Mammary epithelial cell (primary cell): ENCODE measurements at regions of chr6 and their contacts with region 1.

Region 1: DNA sequence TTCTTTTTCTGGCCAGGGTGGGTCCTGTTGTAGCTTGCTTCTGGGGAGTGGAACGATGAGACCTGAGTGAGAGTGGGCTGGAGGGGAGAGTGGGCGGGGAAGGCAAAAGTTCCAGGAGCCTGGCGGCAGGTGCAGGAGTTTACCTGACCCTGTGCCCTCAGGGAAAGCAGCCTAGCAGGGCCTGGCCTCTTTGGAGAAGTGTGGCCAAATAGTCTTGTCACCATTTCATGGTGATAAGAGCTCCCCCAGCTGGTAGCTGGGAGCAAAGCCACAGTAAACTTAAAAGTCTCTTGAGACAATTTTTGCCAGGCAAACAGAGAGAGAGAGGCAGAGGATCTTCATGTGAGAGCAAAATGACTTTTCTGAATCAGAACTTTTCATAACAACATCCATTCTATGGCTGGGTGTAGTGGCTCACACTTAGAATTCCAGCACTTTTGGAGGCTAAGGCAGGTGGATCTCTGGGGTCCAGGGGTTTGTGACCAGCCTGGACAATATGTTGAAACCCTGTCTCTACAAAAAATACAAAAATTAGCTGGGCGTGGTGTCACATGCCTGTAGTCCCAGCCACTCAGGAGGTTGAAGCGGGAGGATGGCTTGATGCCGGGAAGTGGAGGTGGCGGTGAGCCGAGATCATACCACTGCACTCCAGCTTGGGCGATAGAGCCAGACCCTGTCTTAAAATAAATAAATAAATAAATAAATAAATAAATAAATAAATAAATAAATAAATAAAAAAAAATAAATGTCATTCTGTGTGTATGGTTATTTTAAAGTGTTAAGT is 161.8 kb upstream of the SCGN start:
- DNase-seq: peak; percentile 66
- H3K4me3 ChIP-seq: no peak overlapping the region
- H3K27ac ChIP-seq: no peak overlapping the region
- H3K4me1 ChIP-seq: no peaks in the 10 kb centered on the region
- H3K27me3 ChIP-seq: no peaks in the 10 kb centered on the region
- CTCF ChIP-seq: peak; percentile 87 to 91

Region 2: DNA sequence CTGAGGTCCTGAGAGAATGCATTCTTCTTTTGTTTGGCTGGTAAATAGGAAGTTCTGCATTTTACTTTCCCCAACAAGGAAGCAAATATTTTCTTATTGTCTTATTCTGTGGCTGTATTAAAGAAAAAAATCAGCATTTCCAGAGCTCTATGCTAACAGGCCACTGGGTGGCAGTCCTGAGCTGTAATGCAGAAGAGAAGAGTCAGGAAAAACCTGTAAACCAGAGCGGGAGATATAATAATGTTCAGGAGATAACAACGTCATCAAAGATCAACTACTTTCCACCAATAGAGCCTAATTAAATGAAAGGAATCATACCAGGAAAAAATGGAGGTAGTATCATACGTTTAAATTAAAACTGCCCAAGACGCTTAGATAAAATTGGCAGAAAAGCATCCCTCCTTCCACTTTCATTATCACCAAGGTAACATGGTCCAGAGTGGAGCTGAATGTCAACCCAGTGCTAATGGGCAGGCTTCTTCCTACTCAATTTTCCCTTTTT is 266.7 kb before region 1 on chr6:
- CTCF ChIA-PET with region 1: interaction called, 5 read pairs
- dilution Hi-C with region 1: no loop called
- in situ Hi-C with region 1: no loop called
- intact Hi-C with region 1: loop called (anchors 1 kb)
- DNase-seq: peak; percentile 52
- H3K4me3 ChIP-seq: peak overlapping the region in 2 of 3 experiments; percentile 3
- H3K27ac ChIP-seq: no peak overlapping the region
- H3K4me1 ChIP-seq: peaks cover 20% of the 10 kb centered on the region
- H3K27me3 ChIP-seq: no peaks in the 10 kb centered on the region
- CTCF ChIP-seq: peak; percentile 84 to 92

Region 3: DNA sequence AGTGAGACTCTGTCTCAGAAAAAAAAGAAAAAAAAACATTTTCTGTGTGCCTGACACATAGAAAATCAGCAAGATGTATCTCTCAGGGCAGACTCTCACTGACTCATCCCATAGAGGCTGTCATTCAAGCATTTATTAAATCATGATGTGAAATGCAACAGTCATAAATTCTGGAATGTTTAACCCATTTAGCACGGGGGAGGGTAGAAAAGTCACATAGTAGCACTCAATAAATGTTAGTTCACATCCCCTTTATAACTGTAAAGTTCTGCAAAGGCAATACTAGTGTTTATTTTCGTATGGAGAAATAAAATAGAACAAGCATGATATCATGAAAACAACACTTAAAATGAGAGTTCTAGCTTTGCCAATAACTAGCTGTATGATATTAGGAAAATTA is 226.6 kb before region 1 on chr6:
- CTCF ChIA-PET with region 1: interaction called, 21 read pairs
- dilution Hi-C with region 1: no loop called
- in situ Hi-C with region 1: no loop called
- intact Hi-C with region 1: loop called (anchors 1 kb)
- DNase-seq: peak; percentile 68
- H3K4me3 ChIP-seq: no peak overlapping the region
- H3K27ac ChIP-seq: no peak overlapping the region
- H3K4me1 ChIP-seq: no peaks in the 10 kb centered on the region
- H3K27me3 ChIP-seq: no peaks in the 10 kb centered on the region
- CTCF ChIP-seq: no peak

Region 4: DNA sequence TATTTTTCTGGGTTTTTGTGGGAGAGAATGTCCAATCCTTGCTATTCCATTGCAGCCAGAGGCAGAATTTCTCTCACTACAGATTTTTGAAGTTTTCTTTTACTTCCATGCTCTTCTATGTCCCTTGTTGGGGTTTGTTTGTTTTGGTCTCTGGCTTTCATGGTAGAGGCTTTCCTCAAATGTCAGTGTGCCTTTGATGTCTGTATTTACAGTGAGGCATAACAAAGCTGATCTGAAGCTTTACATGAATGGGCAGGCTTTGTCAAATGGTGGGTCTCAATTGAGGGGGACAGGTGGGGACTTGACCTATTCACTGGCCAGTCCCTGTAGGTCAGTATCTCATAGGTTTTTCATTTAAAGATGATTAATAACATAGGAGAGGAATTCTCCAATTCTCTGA is 219.7 kb before region 1 on chr6:
- CTCF ChIA-PET with region 1: interaction called, 21 read pairs
- dilution Hi-C with region 1: no loop called
- in situ Hi-C with region 1: loop called (anchors 5 kb)
- intact Hi-C with region 1: loop called (anchors 1 kb)
- DNase-seq: no peak
- H3K4me3 ChIP-seq: no peak overlapping the region
- H3K27ac ChIP-seq: no peak overlapping the region
- H3K4me1 ChIP-seq: no peaks in the 10 kb centered on the region
- H3K27me3 ChIP-seq: no peaks in the 10 kb centered on the region
- CTCF ChIP-seq: no peak

Region 5: GRCh38 chr6:25359191-25359861 is 130.9 kb before region 1 on chr6:
- CTCF ChIA-PET with region 1: no interaction called
- dilution Hi-C with region 1: no loop called
- in situ Hi-C with region 1: no loop called
- intact Hi-C with region 1: loop called (anchors 5 kb)
- DNase-seq: peak; percentile 58
- H3K4me3 ChIP-seq: peak overlapping the region in 1 of 3 experiments; percentile 2
- H3K27ac ChIP-seq: peak overlapping the region; percentile 81
- H3K4me1 ChIP-seq: peaks cover 52% of the 10 kb centered on the region
- H3K27me3 ChIP-seq: no peaks in the 10 kb centered on the region
- CTCF ChIP-seq: no peak

Region 6: DNA sequence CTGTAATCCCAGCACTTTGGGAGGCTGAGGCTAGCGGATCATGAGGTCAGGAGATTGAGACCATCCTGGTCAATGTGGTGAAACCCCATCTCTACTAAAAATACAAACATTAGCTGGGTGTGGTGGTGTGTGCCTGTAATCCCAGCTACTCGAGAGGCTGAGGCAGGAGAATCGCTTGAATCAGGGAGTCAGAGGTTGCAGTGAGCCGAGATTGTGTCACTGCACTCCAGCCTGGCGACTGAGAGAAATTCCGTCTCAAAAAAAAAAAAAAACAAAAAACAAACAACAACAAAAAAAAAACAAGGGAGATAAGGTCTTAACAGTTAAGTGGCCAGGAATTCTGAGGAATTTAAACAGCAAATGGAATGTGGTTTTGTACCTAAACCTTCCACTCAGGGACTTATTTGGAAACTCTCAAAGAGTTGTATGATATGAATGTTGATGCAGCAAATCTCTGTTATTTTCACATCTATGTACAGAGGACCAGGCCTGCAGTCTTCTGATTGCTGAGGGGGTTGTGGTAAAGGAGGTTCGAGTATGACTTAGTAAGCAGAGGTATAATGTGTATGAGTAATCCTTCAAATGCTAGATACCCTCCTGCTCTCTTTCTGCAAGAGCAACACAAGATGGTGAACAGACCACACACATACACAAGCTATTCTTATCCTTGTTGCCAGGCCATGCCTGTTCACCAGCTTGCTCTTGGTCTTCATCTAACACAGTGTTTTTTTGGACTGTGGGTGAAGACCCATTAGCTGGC is 13.2 kb before region 1 on chr6:
- CTCF ChIA-PET with region 1: no interaction called
- dilution Hi-C with region 1: no loop called
- in situ Hi-C with region 1: no loop called
- intact Hi-C with region 1: no loop called
- DNase-seq: peak; percentile 61
- H3K4me3 ChIP-seq: no peak overlapping the region
- H3K27ac ChIP-seq: no peak overlapping the region
- H3K4me1 ChIP-seq: peaks cover 26% of the 10 kb centered on the region
- H3K27me3 ChIP-seq: no peaks in the 10 kb centered on the region
- CTCF ChIP-seq: no peak

Region 7: DNA sequence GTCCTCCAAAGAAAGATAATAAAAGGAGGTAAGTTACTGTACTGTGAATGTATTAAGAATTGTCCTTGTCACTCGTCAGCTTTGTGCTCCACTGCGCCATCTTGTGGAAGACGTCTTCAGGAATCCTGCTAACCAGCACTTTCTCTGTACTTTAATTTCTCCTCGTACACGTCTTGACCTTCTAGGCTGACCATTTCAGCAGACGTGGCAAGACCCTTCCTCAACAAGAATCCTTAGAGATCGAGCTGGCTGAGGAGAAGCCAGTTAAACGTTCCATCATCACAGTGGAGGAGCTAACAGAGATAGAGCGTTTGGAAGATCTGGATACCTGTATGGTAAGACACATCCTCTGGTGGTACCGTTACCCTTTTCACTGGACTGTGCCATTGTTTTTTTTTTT is 66.3 kb after region 1 on chr6:
- CTCF ChIA-PET with region 1: no interaction called
- dilution Hi-C with region 1: no loop called
- in situ Hi-C with region 1: no loop called
- intact Hi-C with region 1: loop called (anchors 2 kb)
- DNase-seq: peak; percentile 35
- H3K4me3 ChIP-seq: no peak overlapping the region
- H3K27ac ChIP-seq: no peak overlapping the region
- H3K4me1 ChIP-seq: no peaks in the 10 kb centered on the region
- H3K27me3 ChIP-seq: no peaks in the 10 kb centered on the region
- CTCF ChIP-seq: peak; percentile 87